Kidney (tissue), 22 donors: ENCODE measurements at regions of chr12 and their contacts with region 1.

Region 1: DNA sequence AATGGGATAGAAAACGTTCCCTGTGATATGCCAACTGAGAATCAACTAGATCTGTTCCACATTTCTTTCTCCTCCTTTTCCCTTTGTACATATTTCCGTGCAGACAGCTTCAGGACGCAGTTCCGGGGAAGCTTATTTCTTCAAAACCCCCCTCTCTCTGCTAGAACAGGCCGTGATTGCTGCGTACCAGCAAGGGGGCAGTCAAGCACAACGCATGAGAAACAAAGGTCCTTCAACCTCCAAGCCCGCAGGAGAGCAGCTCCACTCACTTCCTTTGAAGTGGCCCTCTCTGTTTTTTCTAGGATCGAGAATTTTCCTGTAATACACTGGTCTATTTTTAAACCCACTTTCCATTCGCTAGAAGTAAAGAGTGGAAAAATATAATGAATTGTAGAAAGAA is 80.8 kb downstream of the ZNF664 start:
- DNase-seq: peak in 4 of 5 donors; percentile 81 to 94 (median 86)
- H3K4me3 ChIP-seq: peak overlapping the region in 2 of 3 donors; percentile 21 to 46
- H3K27ac ChIP-seq: no peak overlapping the region
- H3K4me1 ChIP-seq: peaks cover 4 to 5% (median 5%) of the 10 kb centered on the region in 3 donors
- H3K27me3 ChIP-seq: no peaks in the 10 kb centered on the region
- CTCF ChIP-seq: peak; percentile 67

Region 2: GRCh38 chr12:123983822-123984485 is 69.9 kb before region 1 on chr12:
- intact Hi-C with region 1: no loop called
- DNase-seq: peak in 3 of 5 donors; percentile 31 to 87 (median 75)
- H3K4me3 ChIP-seq: no peak overlapping the region
- H3K27ac ChIP-seq: no peak overlapping the region
- H3K4me1 ChIP-seq: peaks cover 0 to 8% (median 0%) of the 10 kb centered on the region in 3 donors
- H3K27me3 ChIP-seq: no peaks in the 10 kb centered on the region
- CTCF ChIP-seq: peak; percentile 64

Region 3: GRCh38 chr12:124332068-124332672 is 278.3 kb after region 1 on chr12:
- intact Hi-C with region 1: loop called (anchors 5 kb)
- DNase-seq: no peak
- H3K4me3 ChIP-seq: no peak overlapping the region
- H3K27ac ChIP-seq: no peak overlapping the region
- H3K4me1 ChIP-seq: peaks cover 0 to 4% (median 0%) of the 10 kb centered on the region in 3 donors
- H3K27me3 ChIP-seq: no peaks in the 10 kb centered on the region
- CTCF ChIP-seq: no peak